ENCODE measurements at regions of chr3 and their contacts with region 1.

Region 1: GRCh38 chr3:149527531-149528339 is 53.2 kb downstream of the TM4SF4 start:
- DNase-seq: peak; percentile 39 to 75
- ATAC-seq: peak; percentile 76 to 83
- H3K4me3 ChIP-seq: no peak overlapping the region
- H3K27ac ChIP-seq: peak overlapping the region; percentile 70 to 81
- H3K4me1 ChIP-seq: peaks cover 59% of the 10 kb centered on the region
- CTCF ChIP-seq: peak; percentile 51
- EP300 ChIP-seq: no peak
- POLR2A ChIP-seq: no peak
- RAD21 ChIP-seq: peak; percentile 41 to 59

Region 2: GRCh38 chr3:149581681-149582370 is 54.1 kb after region 1 on chr3:
- CTCF ChIA-PET with region 1: interaction called, 10 read pairs
- POLR2A ChIA-PET with region 1: no interaction called
- DNase-seq: peak; percentile 83 to 86
- ATAC-seq: peak; percentile 90 to 95
- H3K4me3 ChIP-seq: peak overlapping the region; percentile 18; the same call in 1 of the 3 replicates
- H3K27ac ChIP-seq: peak overlapping the region; percentile 94
- H3K4me1 ChIP-seq: peaks cover 100% of the 10 kb centered on the region
- CTCF ChIP-seq: no peak
- EP300 ChIP-seq: peak; percentile 30 to 36; a peak in 2 of 5 replicates
- POLR2A ChIP-seq: 0 out of 2 replicates have a peak, but pooled peaks have one; percentile 9
- RAD21 ChIP-seq: no peak; a peak in 1 of 5 replicates

Region 3: GRCh38 chr3:149752051-149752787 is 224.5 kb after region 1 on chr3 and contains the start of gene COMMD2:
- CTCF ChIA-PET with region 1: interaction called, 20 read pairs
- POLR2A ChIA-PET with region 1: no interaction called
- DNase-seq: peak; percentile 82 to 94
- ATAC-seq: peak; percentile 100
- H3K4me3 ChIP-seq: peak within 1 kb of the TSS; percentile 76
- H3K27ac ChIP-seq: peak within 1 kb of the TSS; percentile 87 to 96
- H3K4me1 ChIP-seq: peaks cover 18% of the 10 kb centered on the region; the same call in 2 of the 3 replicates
- CTCF ChIP-seq: peak; percentile 44; the same call in 2 of the 3 replicates
- EP300 ChIP-seq: no peak
- POLR2A ChIP-seq: peak; percentile 86
- RAD21 ChIP-seq: peak; percentile 53 to 65; a peak in 4 of 5 replicates
- polyA plus RNA-seq, gene COMMD2: 71.5 and 76.1 TPM in 2 replicates